K562 (cell line): ENCODE measurements at regions of chr2 and their contacts with region 1.

Region 1: GRCh38 chr2:44044281-44044720 is 48.5 kb upstream of the LRPPRC start:
- DNase-seq: peak; percentile 69 to 87 (median 76)
- ATAC-seq: peak; percentile 100
- H3K4me3 ChIP-seq: no peak overlapping the region
- H3K27ac ChIP-seq: no peak overlapping the region
- H3K4me1 ChIP-seq: peaks cover 0 to 3% of the 10 kb centered on the region in 2 experiments; a peak in 1 of 5 replicates
- H3K27me3 ChIP-seq: peaks cover 2 to 19% of the 10 kb centered on the region in 2 experiments; a peak in 2 of 5 replicates
- CTCF ChIP-seq: peak; percentile 94 to 99 (median 98)
- EP300 ChIP-seq: 0 out of 2 replicates have a peak, but pooled peaks have one; percentile 14
- POLR2A ChIP-seq: no peak
- RAD21 ChIP-seq: peak; percentile 81 to 90

Region 2: GRCh38 chr2:43877782-43878464 is 166.4 kb before region 1 on chr2:
- CTCF ChIA-PET with region 1: no interaction called
- POLR2A ChIA-PET with region 1: no interaction called
- in situ Hi-C with region 1: no loop called
- intact Hi-C with region 1: loop called (anchors 5 kb)
- DNase-seq: peak; percentile 73 to 81 (median 78)
- ATAC-seq: peak; percentile 93
- H3K4me3 ChIP-seq: no peak overlapping the region
- H3K27ac ChIP-seq: no peak overlapping the region
- H3K4me1 ChIP-seq: no peaks in the 10 kb centered on the region
- H3K27me3 ChIP-seq: peaks cover 18 to 41% of the 10 kb centered on the region in 2 experiments; a peak in 4 of 5 replicates
- CTCF ChIP-seq: peak; percentile 85 to 97 (median 89)
- EP300 ChIP-seq: no peak
- POLR2A ChIP-seq: no peak
- RAD21 ChIP-seq: peak; percentile 76 to 89

Region 3: GRCh38 chr2:44244129-44244871 is 200.0 kb after region 1 on chr2:
- CTCF ChIA-PET with region 1: no interaction called
- POLR2A ChIA-PET with region 1: no interaction called
- in situ Hi-C with region 1: no loop called
- intact Hi-C with region 1: loop called (anchors 1 kb)
- DNase-seq: peak; percentile 46 to 74 (median 53)
- ATAC-seq: peak; percentile 86
- H3K4me3 ChIP-seq: no peak overlapping the region
- H3K27ac ChIP-seq: no peak overlapping the region
- H3K4me1 ChIP-seq: no peaks in the 10 kb centered on the region; a peak in 1 of 5 replicates
- H3K27me3 ChIP-seq: peaks cover 3% of the 10 kb centered on the region in 2 experiments; a peak in 2 of 5 replicates
- CTCF ChIP-seq: peak; percentile 48 to 68 (median 60); a peak in 5 of 6 replicates
- EP300 ChIP-seq: no peak
- POLR2A ChIP-seq: no peak
- RAD21 ChIP-seq: peak; percentile 40 to 50

Region 4: DNA sequence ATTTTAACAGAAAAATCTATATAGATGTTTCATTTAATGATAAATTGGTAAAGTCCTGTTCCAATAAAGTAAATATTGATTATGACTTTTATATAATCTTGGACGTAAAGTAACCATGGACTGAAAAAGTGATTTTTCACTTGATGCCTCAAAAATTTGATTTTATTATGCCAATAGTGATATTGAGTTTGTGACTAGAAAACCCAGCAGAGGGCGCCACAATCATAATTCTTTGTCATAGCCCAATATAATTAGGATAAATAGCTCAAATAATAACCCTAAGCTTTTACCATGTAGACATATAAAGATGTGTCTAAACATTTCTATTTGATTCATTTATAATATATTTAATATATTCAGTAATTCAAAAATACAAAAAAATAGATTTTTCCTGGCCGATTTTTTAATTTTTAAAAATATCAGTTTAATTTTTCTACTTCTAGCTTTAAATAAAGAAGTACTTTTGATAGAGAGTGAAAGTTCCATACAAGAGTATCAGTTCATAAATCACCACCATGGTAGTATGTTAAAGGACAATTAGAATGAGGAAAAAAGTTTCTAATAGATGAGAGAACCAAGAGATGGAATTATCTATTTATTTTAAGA is 348.1 kb after region 1 on chr2:
- CTCF ChIA-PET with region 1: no interaction called
- POLR2A ChIA-PET with region 1: no interaction called
- in situ Hi-C with region 1: no loop called
- intact Hi-C with region 1: loop called (anchors 5 kb)
- DNase-seq: peak in 3 of 4 experiments; percentile 8 to 57 (median 13)
- ATAC-seq: no peak
- H3K4me3 ChIP-seq: no peak overlapping the region
- H3K27ac ChIP-seq: no peak overlapping the region
- H3K4me1 ChIP-seq: no peaks in the 10 kb centered on the region; a peak in 1 of 5 replicates
- H3K27me3 ChIP-seq: no peaks in the 10 kb centered on the region
- CTCF ChIP-seq: peak in 2 of 3 experiments; percentile 63 to 71; a peak in 4 of 6 replicates
- EP300 ChIP-seq: no peak
- POLR2A ChIP-seq: no peak
- RAD21 ChIP-seq: peak; percentile 34 to 52

Region 5: GRCh38 chr2:44955593-44956392 is 911.5 kb after region 1 on chr2:
- CTCF ChIA-PET with region 1: interaction called, 5 read pairs
- POLR2A ChIA-PET with region 1: no interaction called
- in situ Hi-C with region 1: no loop called
- intact Hi-C with region 1: loop called (anchors 2 kb)
- DNase-seq: peak; percentile 75 to 78 (median 78)
- ATAC-seq: peak; percentile 93
- H3K4me3 ChIP-seq: no peak overlapping the region
- H3K27ac ChIP-seq: no peak overlapping the region
- H3K4me1 ChIP-seq: peaks cover 0 to 26% of the 10 kb centered on the region in 2 experiments; a peak in 3 of 5 replicates
- H3K27me3 ChIP-seq: peaks cover 19 to 66% of the 10 kb centered on the region in 2 experiments; a peak in 4 of 5 replicates
- CTCF ChIP-seq: peak; percentile 79 to 97 (median 87)
- EP300 ChIP-seq: no peak
- POLR2A ChIP-seq: no peak
- RAD21 ChIP-seq: peak; percentile 83 to 92